ENCODE measurements at regions of chr6 and their contacts with region 1.

Region 1: DNA sequence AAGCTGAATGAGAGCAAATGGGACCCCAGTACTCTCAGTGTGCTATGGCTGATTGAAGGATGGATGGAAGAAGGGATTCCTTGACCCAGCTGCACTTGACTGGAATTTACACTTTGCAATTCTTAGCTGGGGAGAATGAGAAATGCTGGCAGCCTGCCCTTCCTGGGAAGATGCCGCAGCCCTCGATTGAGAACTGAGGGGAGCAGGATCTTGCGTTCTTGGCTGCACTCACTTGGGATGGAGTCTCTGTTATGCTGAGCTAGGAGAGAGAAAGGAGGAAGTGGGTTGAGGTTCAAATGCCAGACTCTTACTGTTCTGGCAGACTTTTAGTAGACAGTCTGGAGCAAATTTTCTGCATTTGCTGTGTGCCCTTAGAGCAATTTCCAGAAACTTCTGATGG is 221.2 kb downstream of the FNDC1 start:
- DNase-seq: no peak
- H3K4me3 ChIP-seq: no peak overlapping the region
- H3K27ac ChIP-seq: no peak overlapping the region
- H3K4me1 ChIP-seq: peaks cover 11% of the 10 kb centered on the region
- H3K27me3 ChIP-seq: no peaks in the 10 kb centered on the region
- CTCF ChIP-seq: no peak
- POLR2A ChIP-seq: no peak

Region 2: DNA sequence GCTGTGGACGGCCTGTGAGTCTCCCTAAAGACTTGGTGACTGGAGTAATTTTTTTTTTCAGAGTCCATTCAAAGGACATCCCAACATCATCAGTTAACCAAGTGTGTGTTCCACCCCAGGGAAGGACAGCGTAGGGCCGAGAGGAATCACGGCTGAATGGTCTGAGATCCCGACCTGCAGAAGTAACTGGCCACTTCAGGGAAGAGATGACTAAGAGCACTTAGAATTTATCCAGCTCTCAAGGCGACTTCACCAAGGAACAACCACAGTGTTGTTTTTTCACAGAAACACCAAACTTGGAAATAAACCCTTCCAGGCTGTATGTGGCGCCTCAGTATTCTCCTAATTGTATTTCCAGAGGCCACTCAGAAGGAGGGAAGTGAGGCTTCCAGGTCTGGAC is 10.4 kb after region 1 on chr6:
- intact Hi-C with region 1: loop called (anchors 1 kb)
- DNase-seq: no peak
- H3K4me3 ChIP-seq: no peak overlapping the region
- H3K27ac ChIP-seq: no peak overlapping the region
- H3K4me1 ChIP-seq: no peaks in the 10 kb centered on the region
- H3K27me3 ChIP-seq: no peaks in the 10 kb centered on the region
- CTCF ChIP-seq: no peak
- POLR2A ChIP-seq: no peak

Region 3: GRCh38 chr6:159416891-159417560 is 26.6 kb after region 1 on chr6:
- intact Hi-C with region 1: loop called (anchors 1 kb)
- DNase-seq: peak in 1 of 2 donors; percentile 40
- H3K4me3 ChIP-seq: no peak overlapping the region
- H3K27ac ChIP-seq: no peak overlapping the region
- H3K4me1 ChIP-seq: no peaks in the 10 kb centered on the region
- H3K27me3 ChIP-seq: no peaks in the 10 kb centered on the region
- CTCF ChIP-seq: no peak
- POLR2A ChIP-seq: no peak